ENCODE measurements at regions of chr2 and their contacts with region 1.

Region 1: GRCh38 chr2:204871231-204871953 is 326.1 kb downstream of the PARD3B start:
- DNase-seq: peak; percentile 87
- H3K4me3 ChIP-seq: no peak overlapping the region
- H3K27ac ChIP-seq: peak overlapping the region; percentile 42
- H3K4me1 ChIP-seq: peaks cover 14% of the 10 kb centered on the region
- H3K27me3 ChIP-seq: no peaks in the 10 kb centered on the region
- CTCF ChIP-seq: peak in 1 of 2 donors; percentile 20
- POLR2A ChIP-seq: no peak

Region 2: DNA sequence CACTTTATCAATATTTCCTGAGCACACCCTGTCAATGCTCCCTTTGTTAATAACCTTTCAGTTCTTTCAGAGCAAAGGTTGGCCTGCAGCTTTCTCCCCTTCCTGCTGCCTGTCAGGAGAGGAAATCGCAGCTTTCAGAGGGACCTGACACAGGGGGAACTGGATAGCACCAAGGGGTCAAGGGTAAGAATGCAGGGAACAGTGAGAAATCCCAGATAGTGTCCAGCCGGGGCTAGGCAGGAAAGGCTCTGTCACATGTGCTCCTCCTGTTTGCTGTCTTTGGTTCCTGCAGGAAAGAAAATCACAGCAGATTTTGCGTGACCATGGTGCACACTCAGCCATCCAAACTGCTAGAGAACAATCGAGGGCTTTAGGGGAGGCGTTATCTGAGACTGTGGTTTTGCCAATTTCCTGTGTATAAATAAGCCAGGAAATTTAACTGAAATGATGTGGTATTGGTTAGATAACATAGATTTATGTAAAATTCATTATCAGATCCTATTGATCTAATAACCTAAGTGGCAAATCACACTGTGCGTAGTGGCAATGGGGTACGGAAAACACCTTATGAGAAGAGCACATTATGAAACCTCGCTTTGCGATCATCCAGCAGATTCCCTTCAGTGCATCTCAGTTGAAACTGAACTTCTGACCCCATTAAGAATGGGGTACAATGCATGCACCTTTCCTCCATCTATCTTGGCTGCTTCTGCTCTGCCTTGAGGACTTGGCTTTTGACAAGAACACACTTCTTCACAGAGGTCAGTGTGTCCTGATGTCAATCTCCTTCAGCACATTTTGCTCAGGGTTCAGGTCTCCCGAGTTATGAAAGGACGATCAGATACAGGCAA is 756.9 kb before region 1 on chr2:
- CTCF ChIA-PET with region 1: no interaction called
- POLR2A ChIA-PET with region 1: no interaction called
- dilution Hi-C with region 1: no loop called
- intact Hi-C with region 1: loop called (anchors 2 kb)
- DNase-seq: peak; percentile 99
- H3K4me3 ChIP-seq: peak overlapping the region in 1 of 3 experiments; percentile 11
- H3K27ac ChIP-seq: peak overlapping the region; percentile 86
- H3K4me1 ChIP-seq: peaks cover 77% of the 10 kb centered on the region
- H3K27me3 ChIP-seq: no peaks in the 10 kb centered on the region
- CTCF ChIP-seq: no peak
- POLR2A ChIP-seq: peak; percentile 73

Region 3: GRCh38 chr2:204260162-204260877 is 611.1 kb before region 1 on chr2:
- CTCF ChIA-PET with region 1: interaction called, 6 read pairs
- POLR2A ChIA-PET with region 1: no interaction called
- dilution Hi-C with region 1: no loop called
- intact Hi-C with region 1: loop called (anchors 5 kb)
- DNase-seq: peak; percentile 86
- H3K4me3 ChIP-seq: no peak overlapping the region
- H3K27ac ChIP-seq: no peak overlapping the region
- H3K4me1 ChIP-seq: peaks cover 6% of the 10 kb centered on the region
- H3K27me3 ChIP-seq: peaks cover 0 to 2% of the 10 kb centered on the region in 2 experiments
- CTCF ChIP-seq: peak; percentile 63 to 72
- POLR2A ChIP-seq: no peak

Region 4: DNA sequence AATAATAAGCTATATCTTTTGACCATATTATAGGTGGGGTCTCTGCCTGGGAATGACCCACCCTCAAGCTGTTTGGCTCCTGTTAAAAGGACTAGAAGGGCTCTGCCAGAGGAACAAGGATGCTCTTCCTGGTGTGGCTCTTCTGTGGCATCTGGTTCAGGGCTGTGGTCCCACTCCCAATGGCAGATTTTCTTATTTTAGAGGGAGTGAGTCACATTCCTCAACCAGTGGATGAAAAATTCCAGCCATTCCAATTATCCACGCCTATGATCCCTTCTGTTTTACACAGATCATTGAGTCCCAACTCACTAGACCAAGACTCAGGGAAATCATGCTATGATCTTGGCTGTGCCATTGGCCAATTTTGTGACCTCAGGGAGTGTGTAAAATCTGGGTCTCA is 206.1 kb before region 1 on chr2:
- CTCF ChIA-PET with region 1: no interaction called
- POLR2A ChIA-PET with region 1: no interaction called
- dilution Hi-C with region 1: no loop called
- intact Hi-C with region 1: no loop called
- DNase-seq: no peak
- H3K4me3 ChIP-seq: no peak overlapping the region
- H3K27ac ChIP-seq: peak overlapping the region; percentile 92
- H3K4me1 ChIP-seq: peaks cover 45% of the 10 kb centered on the region
- H3K27me3 ChIP-seq: no peaks in the 10 kb centered on the region
- CTCF ChIP-seq: no peak
- POLR2A ChIP-seq: no peak

Region 5: DNA sequence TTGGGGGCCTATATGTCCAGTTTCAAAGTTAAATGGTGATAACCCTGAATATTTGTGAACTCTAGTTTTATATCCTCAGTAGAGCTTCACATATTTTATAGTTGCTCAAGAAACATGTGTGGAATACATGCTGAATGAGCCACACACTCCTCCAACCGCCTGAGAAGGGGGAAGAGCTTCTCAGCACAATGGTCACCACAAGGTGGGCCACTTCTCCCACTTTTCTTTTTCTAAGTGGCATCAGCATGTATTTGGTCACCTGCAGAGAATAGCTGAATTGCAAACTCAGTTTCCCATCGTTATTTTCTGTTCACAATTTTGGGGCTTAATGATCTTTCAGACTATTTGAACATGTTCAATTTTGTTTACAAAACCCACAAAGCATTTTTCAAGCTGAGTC is 14.4 kb after region 1 on chr2:
- CTCF ChIA-PET with region 1: interaction called, 12 read pairs
- POLR2A ChIA-PET with region 1: no interaction called
- dilution Hi-C with region 1: no loop called
- intact Hi-C with region 1: no loop called
- DNase-seq: peak; percentile 16
- H3K4me3 ChIP-seq: no peak overlapping the region
- H3K27ac ChIP-seq: no peak overlapping the region
- H3K4me1 ChIP-seq: no peaks in the 10 kb centered on the region
- H3K27me3 ChIP-seq: no peaks in the 10 kb centered on the region
- CTCF ChIP-seq: no peak
- POLR2A ChIP-seq: no peak

Region 6: DNA sequence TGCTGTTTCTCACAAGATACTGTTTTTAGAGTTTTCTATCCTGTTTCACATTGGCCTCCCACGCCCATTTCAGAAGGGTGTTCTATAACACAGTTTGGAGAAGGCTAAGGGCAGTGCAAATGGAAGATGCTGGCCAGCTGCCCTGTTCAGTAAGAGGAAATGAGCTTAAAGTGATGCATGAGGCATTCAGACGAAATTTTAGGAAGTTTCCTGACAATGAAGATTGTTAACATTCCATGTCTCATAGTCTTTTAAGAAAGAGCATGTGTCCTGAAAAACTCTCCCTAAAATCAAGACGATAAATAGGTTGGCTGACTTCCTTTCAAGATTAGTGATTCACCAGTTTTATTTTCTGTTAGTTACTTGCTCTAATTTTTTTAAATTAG is 326.7 kb after region 1 on chr2:
- CTCF ChIA-PET with region 1: no interaction called
- POLR2A ChIA-PET with region 1: no interaction called
- dilution Hi-C with region 1: no loop called
- intact Hi-C with region 1: no loop called
- DNase-seq: peak; percentile 83
- H3K4me3 ChIP-seq: peak overlapping the region in 1 of 3 experiments; percentile 15
- H3K27ac ChIP-seq: peak overlapping the region; percentile 79
- H3K4me1 ChIP-seq: peaks cover 22% of the 10 kb centered on the region
- H3K27me3 ChIP-seq: no peaks in the 10 kb centered on the region
- CTCF ChIP-seq: no peak
- POLR2A ChIP-seq: no peak

Region 7: GRCh38 chr2:205563646-205564045 is 692.3 kb after region 1 on chr2:
- CTCF ChIA-PET with region 1: no interaction called
- POLR2A ChIA-PET with region 1: no interaction called
- dilution Hi-C with region 1: no loop called
- intact Hi-C with region 1: loop called (anchors 10 kb)
- DNase-seq: no peak
- H3K4me3 ChIP-seq: no peak overlapping the region
- H3K27ac ChIP-seq: no peak overlapping the region
- H3K4me1 ChIP-seq: no peaks in the 10 kb centered on the region
- H3K27me3 ChIP-seq: no peaks in the 10 kb centered on the region
- CTCF ChIP-seq: peak; percentile 41 to 42
- POLR2A ChIP-seq: no peak